ENCODE measurements at regions of chr6 and their contacts with region 1.

Region 1: GRCh38 chr6:116531675-116532570 is 13.6 kb downstream of the TRAPPC3L start:
- DNase-seq: peak; percentile 82
- ATAC-seq: peak; percentile 98
- H3K4me3 ChIP-seq: no peak overlapping the region
- H3K4me3 Mint-ChIP-seq: no peak overlapping the region
- H3K27ac ChIP-seq: no peak overlapping the region
- H3K27ac Mint-ChIP-seq: no peak overlapping the region
- H3K4me1 ChIP-seq: peaks cover 0 to 5% of the 10 kb centered on the region in 2 donors
- H3K4me1 Mint-ChIP-seq: peaks cover 11% of the 10 kb centered on the region
- H3K27me3 ChIP-seq: no peaks in the 10 kb centered on the region
- H3K27me3 Mint-ChIP-seq: peaks cover 3% of the 10 kb centered on the region
- CTCF ChIP-seq: peak; percentile 90

Region 2: DNA sequence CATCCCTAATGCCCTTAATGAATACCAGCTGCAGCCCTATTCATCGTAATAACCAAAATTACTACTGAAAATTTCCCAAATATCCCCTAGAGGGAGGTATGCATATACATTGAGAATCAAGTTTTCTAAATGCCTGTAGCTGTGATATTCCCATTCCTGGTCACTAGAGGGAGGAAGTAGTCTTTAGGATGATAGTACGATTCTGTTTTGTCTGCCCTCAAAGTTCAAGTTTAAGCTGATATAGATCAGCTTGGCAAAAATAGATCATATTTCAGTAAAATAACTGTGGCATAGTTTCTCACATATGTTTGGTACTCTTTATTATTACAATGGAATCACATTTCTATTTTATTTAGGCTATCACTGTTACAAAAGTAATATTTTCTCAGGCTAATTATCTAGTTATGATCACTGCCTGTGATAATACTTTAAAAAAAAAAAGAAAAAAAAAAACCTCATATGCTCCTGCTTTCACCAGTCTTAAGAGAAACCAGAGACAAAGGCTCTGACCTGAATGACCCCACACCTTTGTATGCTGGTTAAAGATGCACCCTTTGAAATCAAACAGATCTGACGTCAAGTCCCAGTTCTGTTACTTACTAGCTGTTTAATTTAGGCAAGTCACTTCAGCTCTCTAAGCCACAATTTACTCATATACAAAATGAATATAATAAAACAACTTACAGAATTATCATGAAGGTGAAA is 263.2 kb before region 1 on chr6:
- CTCF ChIA-PET with region 1: interaction called, 52 read pairs
- POLR2A ChIA-PET with region 1: no interaction called
- intact Hi-C with region 1: no loop called
- DNase-seq: peak; percentile 71
- ATAC-seq: peak; percentile 77
- H3K4me3 ChIP-seq: no peak overlapping the region
- H3K4me3 Mint-ChIP-seq: no peak overlapping the region
- H3K27ac ChIP-seq: no peak overlapping the region
- H3K27ac Mint-ChIP-seq: no peak overlapping the region
- H3K4me1 ChIP-seq: no peaks in the 10 kb centered on the region
- H3K4me1 Mint-ChIP-seq: peaks cover 22% of the 10 kb centered on the region
- H3K27me3 ChIP-seq: no peaks in the 10 kb centered on the region
- H3K27me3 Mint-ChIP-seq: no peaks in the 10 kb centered on the region
- CTCF ChIP-seq: peak; percentile 75

Region 3: GRCh38 chr6:116298973-116299372 is 232.9 kb before region 1 on chr6:
- CTCF ChIA-PET with region 1: interaction called, 13 read pairs
- POLR2A ChIA-PET with region 1: no interaction called
- intact Hi-C with region 1: no loop called
- DNase-seq: no peak
- ATAC-seq: no peak
- H3K4me3 ChIP-seq: no peak overlapping the region
- H3K4me3 Mint-ChIP-seq: no peak overlapping the region
- H3K27ac ChIP-seq: no peak overlapping the region
- H3K27ac Mint-ChIP-seq: no peak overlapping the region
- H3K4me1 ChIP-seq: peaks cover 4 to 6% of the 10 kb centered on the region in 2 donors
- H3K4me1 Mint-ChIP-seq: peaks cover 11% of the 10 kb centered on the region
- H3K27me3 ChIP-seq: no peaks in the 10 kb centered on the region
- H3K27me3 Mint-ChIP-seq: no peaks in the 10 kb centered on the region
- CTCF ChIP-seq: no peak

Region 4: GRCh38 chr6:116392132-116393013 is 139.6 kb before region 1 on chr6:
- CTCF ChIA-PET with region 1: interaction called, 16 read pairs
- POLR2A ChIA-PET with region 1: no interaction called
- intact Hi-C with region 1: no loop called
- DNase-seq: peak; percentile 68
- ATAC-seq: peak; percentile 40
- H3K4me3 ChIP-seq: peak overlapping the region in 1 of 5 experiments; percentile 19
- H3K4me3 Mint-ChIP-seq: peak overlapping the region; percentile 66
- H3K27ac ChIP-seq: peak overlapping the region; percentile 39 to 93
- H3K27ac Mint-ChIP-seq: peak overlapping the region; percentile 81
- H3K4me1 ChIP-seq: peaks cover 71 to 77% of the 10 kb centered on the region in 2 donors
- H3K4me1 Mint-ChIP-seq: peaks cover 67% of the 10 kb centered on the region
- H3K27me3 ChIP-seq: no peaks in the 10 kb centered on the region
- H3K27me3 Mint-ChIP-seq: no peaks in the 10 kb centered on the region
- CTCF ChIP-seq: no peak

Region 5: DNA sequence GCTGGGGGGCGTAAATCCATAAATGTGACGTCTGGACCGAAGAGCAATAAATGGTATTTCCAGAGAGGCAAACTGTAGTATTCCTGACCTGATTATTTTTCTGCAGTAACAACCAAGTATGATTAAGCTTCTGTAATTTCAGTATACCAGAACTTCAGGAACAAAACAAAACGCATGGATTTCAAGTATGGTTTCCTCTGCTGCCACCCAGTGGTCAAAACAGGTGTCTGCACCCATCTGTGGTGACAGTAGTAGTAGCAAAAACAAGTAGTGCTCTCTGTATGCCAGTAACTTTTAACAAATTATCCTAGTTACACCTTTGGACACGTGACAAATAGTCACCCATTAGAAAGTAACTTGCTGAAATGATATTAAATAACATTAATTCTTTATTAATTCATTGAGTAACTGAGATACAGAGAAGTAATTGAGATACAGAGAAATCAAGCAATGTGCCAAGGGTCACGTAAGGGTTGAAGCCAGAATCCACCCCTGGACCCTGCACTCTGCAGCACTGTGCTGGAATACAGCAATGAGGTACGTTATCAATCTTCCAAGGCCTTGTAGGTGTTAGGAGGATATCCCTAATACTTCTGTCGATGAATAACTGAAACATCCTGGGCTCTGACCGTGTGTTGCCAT is 29.6 kb after region 1 on chr6:
- CTCF ChIA-PET with region 1: interaction called, 26 read pairs
- POLR2A ChIA-PET with region 1: no interaction called
- intact Hi-C with region 1: loop called (anchors 1 kb)
- DNase-seq: peak; percentile 78
- ATAC-seq: peak; percentile 82
- H3K4me3 ChIP-seq: no peak overlapping the region
- H3K4me3 Mint-ChIP-seq: no peak overlapping the region
- H3K27ac ChIP-seq: no peak overlapping the region
- H3K27ac Mint-ChIP-seq: no peak overlapping the region
- H3K4me1 ChIP-seq: peaks cover 5 to 7% of the 10 kb centered on the region in 2 donors
- H3K4me1 Mint-ChIP-seq: peaks cover 4% of the 10 kb centered on the region
- H3K27me3 ChIP-seq: peaks cover 0 to 14% (median 9%) of the 10 kb centered on the region in 4 experiments
- H3K27me3 Mint-ChIP-seq: peaks cover 31% of the 10 kb centered on the region
- CTCF ChIP-seq: peak; percentile 98

Region 6: GRCh38 chr6:116847227-116847626 is 315.3 kb after region 1 on chr6:
- CTCF ChIA-PET with region 1: no interaction called
- POLR2A ChIA-PET with region 1: no interaction called
- intact Hi-C with region 1: loop called (anchors 10 kb)
- DNase-seq: no peak
- ATAC-seq: no peak
- H3K4me3 ChIP-seq: no peak overlapping the region
- H3K4me3 Mint-ChIP-seq: no peak overlapping the region
- H3K27ac ChIP-seq: no peak overlapping the region
- H3K27ac Mint-ChIP-seq: no peak overlapping the region
- H3K4me1 ChIP-seq: no peaks in the 10 kb centered on the region
- H3K4me1 Mint-ChIP-seq: no peaks in the 10 kb centered on the region
- H3K27me3 ChIP-seq: no peaks in the 10 kb centered on the region
- H3K27me3 Mint-ChIP-seq: peaks cover 23% of the 10 kb centered on the region
- CTCF ChIP-seq: no peak

Region 7: DNA sequence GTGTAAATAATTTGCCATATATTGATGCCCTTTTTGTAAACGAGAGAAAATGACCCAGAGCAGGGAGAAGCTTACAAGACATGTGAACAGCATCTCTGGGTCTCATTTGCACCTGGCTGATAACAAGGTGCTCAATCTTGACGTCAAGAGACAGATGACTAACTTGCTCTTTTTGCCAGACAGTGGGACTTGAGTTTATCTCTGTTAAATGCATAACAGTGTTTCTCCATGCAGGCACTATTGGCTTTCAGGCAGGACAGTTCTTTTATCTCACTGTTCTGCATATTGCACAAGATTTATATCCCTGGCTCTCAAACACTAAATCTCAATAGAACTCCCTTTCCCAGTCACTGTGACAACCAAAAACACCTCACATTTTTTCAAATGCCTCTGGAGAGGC is 401.6 kb after region 1 on chr6:
- CTCF ChIA-PET with region 1: no interaction called
- POLR2A ChIA-PET with region 1: no interaction called
- intact Hi-C with region 1: no loop called
- DNase-seq: no peak
- ATAC-seq: no peak
- H3K4me3 ChIP-seq: no peak overlapping the region
- H3K4me3 Mint-ChIP-seq: no peak overlapping the region
- H3K27ac ChIP-seq: no peak overlapping the region
- H3K27ac Mint-ChIP-seq: no peak overlapping the region
- H3K4me1 ChIP-seq: no peaks in the 10 kb centered on the region
- H3K4me1 Mint-ChIP-seq: no peaks in the 10 kb centered on the region
- H3K27me3 ChIP-seq: no peaks in the 10 kb centered on the region
- H3K27me3 Mint-ChIP-seq: peaks cover 10% of the 10 kb centered on the region
- CTCF ChIP-seq: no peak

Measured in B cell (primary cell).